Caco-2 (cell line): ENCODE measurements at regions of chr3 and their contacts with region 1.

Region 1: GRCh38 chr3:154642145-154642544 is 212.2 kb upstream of the GPR149 start:
- DNase-seq: no peak
- H3K4me3 ChIP-seq: no peak overlapping the region
- H3K4me3 Mint-ChIP-seq: no peak overlapping the region
- H3K27ac Mint-ChIP-seq: no peak overlapping the region
- H3K4me1 ChIP-seq: no peaks in the 10 kb centered on the region
- H3K4me1 Mint-ChIP-seq: peaks cover 7% of the 10 kb centered on the region
- H3K27me3 ChIP-seq: no peaks in the 10 kb centered on the region
- H3K27me3 Mint-ChIP-seq: no peaks in the 10 kb centered on the region
- CTCF ChIP-seq: no peak

Region 2: GRCh38 chr3:152779653-152780052 is 1862.5 kb before region 1 on chr3:
- CTCF ChIA-PET with region 1: no interaction called
- POLR2A ChIA-PET with region 1: no interaction called
- intact Hi-C with region 1: no loop called
- DNase-seq: no peak
- H3K4me3 ChIP-seq: no peak overlapping the region
- H3K4me3 Mint-ChIP-seq: no peak overlapping the region
- H3K27ac Mint-ChIP-seq: no peak overlapping the region
- H3K4me1 ChIP-seq: peaks cover 10% of the 10 kb centered on the region
- H3K4me1 Mint-ChIP-seq: peaks cover 12% of the 10 kb centered on the region
- H3K27me3 ChIP-seq: no peaks in the 10 kb centered on the region
- H3K27me3 Mint-ChIP-seq: no peaks in the 10 kb centered on the region
- CTCF ChIP-seq: no peak

Region 3: DNA sequence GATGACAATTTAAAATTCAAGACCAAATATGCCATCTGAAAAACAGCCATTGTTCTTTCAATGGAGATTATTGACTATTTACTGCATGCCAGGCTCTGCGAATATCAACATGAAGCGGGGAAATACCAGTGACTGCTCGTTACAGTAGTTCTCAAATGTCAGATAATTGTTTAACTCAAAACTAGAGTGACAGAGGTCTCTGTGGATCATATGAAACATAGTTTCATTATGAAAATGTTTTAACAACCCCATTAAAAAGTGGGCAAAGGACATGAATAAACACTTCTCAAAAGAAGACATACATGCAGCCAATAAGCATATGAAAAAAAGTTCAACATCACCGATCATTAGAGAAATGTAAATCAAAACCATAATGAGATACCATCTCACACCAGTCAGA is 162.1 kb before region 1 on chr3:
- CTCF ChIA-PET with region 1: no interaction called
- POLR2A ChIA-PET with region 1: no interaction called
- intact Hi-C with region 1: no loop called
- DNase-seq: no peak
- H3K4me3 ChIP-seq: no peak overlapping the region
- H3K4me3 Mint-ChIP-seq: no peak overlapping the region
- H3K27ac Mint-ChIP-seq: no peak overlapping the region
- H3K4me1 ChIP-seq: no peaks in the 10 kb centered on the region
- H3K4me1 Mint-ChIP-seq: no peaks in the 10 kb centered on the region
- H3K27me3 ChIP-seq: no peaks in the 10 kb centered on the region
- H3K27me3 Mint-ChIP-seq: peaks cover 7% of the 10 kb centered on the region
- CTCF ChIP-seq: no peak

Region 4: DNA sequence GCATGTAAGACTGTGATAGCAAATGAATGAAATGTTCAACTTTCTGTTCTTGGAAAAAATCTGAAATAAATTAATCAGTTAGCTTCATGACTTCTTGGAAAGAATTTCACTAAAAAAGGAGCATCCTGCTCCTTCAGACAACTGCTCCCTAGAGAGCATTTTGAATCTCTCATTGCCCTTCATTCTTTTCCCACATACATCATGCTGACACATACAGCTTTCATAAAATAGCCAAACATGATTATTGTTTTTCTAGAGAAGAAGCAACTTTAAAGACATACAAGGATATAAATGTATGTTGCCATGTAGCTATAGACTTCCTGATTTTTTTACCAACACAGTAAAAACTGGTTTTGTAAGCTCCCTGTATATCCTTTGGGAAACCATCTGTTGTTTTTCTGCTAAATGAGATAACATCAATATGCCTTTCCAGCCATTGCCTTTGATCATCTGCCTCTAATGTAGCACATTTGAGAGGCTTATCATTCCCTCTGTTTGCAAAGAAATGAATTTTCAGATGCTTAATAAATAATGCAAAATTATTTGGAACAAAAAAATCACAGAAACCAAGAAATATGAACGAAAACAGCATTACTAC is 36.0 kb after region 1 on chr3:
- CTCF ChIA-PET with region 1: no interaction called
- POLR2A ChIA-PET with region 1: interaction called, 14 read pairs
- intact Hi-C with region 1: no loop called
- DNase-seq: no peak
- H3K4me3 ChIP-seq: no peak overlapping the region
- H3K4me3 Mint-ChIP-seq: no peak overlapping the region
- H3K27ac Mint-ChIP-seq: no peak overlapping the region
- H3K4me1 ChIP-seq: no peaks in the 10 kb centered on the region
- H3K4me1 Mint-ChIP-seq: no peaks in the 10 kb centered on the region
- H3K27me3 ChIP-seq: no peaks in the 10 kb centered on the region
- H3K27me3 Mint-ChIP-seq: peaks cover 3% of the 10 kb centered on the region
- CTCF ChIP-seq: no peak